ENCODE measurements at regions of chr11 and their contacts with region 1.

Region 1: DNA sequence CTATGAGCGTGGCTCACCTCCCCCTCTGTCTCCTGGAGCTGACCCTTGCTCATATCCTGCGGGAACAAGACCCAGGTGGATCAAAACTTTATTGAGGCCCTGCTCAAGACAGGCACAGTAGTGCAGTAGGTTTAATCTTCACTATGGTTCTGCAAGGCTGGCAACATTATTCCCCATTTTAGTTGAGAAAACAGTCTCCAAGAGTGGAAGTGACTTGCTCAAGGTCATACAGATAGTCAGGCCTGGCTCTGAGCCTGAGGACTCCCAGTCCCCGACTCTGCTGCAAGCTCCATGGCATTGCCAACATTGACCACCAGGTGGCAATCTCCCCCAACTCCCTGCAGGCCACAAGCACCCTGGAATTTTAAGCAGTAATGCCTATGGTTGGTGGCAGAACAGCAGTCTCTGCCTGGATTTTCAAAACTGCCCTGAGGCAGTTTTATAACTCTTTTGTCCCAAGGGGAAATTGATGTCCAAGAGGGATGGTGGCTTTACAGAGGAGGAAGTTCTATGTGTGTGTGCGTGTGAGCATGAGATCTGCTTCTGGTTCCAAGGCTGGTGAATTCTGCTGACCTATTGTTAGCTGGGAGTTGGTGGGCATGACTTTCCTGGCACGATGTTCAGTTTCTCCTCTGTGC is 34.1 kb downstream of the NEU3 start:
- DNase-seq: peak; percentile 64
- H3K4me3 ChIP-seq: no peak overlapping the region
- H3K27ac ChIP-seq: no peak overlapping the region
- H3K4me1 ChIP-seq: no peaks in the 10 kb centered on the region
- H3K27me3 ChIP-seq: no peaks in the 10 kb centered on the region
- CTCF ChIP-seq: peak; percentile 96 to 98

Region 2: GRCh38 chr11:74929431-74930363 is 93.2 kb before region 1 on chr11:
- CTCF ChIA-PET with region 1: interaction called, 9 read pairs
- dilution Hi-C with region 1: no loop called
- in situ Hi-C with region 1: no loop called
- intact Hi-C with region 1: loop called (anchors 2 kb)
- DNase-seq: peak; percentile 77
- H3K4me3 ChIP-seq: no peak overlapping the region
- H3K27ac ChIP-seq: no peak overlapping the region
- H3K4me1 ChIP-seq: peaks cover 21% of the 10 kb centered on the region
- H3K27me3 ChIP-seq: no peaks in the 10 kb centered on the region
- CTCF ChIP-seq: peak; percentile 84 to 88

Region 3: GRCh38 chr11:75063732-75064314 is 40.9 kb after region 1 on chr11:
- CTCF ChIA-PET with region 1: no interaction called
- dilution Hi-C with region 1: no loop called
- in situ Hi-C with region 1: no loop called
- intact Hi-C with region 1: no loop called
- DNase-seq: no peak
- H3K4me3 ChIP-seq: no peak overlapping the region
- H3K27ac ChIP-seq: no peak overlapping the region
- H3K4me1 ChIP-seq: no peaks in the 10 kb centered on the region
- H3K27me3 ChIP-seq: peaks cover 4% of the 10 kb centered on the region
- CTCF ChIP-seq: no peak

Region 4: GRCh38 chr11:75142714-75143419 is 120.0 kb after region 1 on chr11:
- CTCF ChIA-PET with region 1: no interaction called
- dilution Hi-C with region 1: loop called (anchors 10 kb)
- in situ Hi-C with region 1: no loop called
- intact Hi-C with region 1: loop called (anchors 2 kb)
- DNase-seq: peak; percentile 86
- H3K4me3 ChIP-seq: no peak overlapping the region
- H3K27ac ChIP-seq: no peak overlapping the region
- H3K4me1 ChIP-seq: peaks cover 10% of the 10 kb centered on the region
- H3K27me3 ChIP-seq: no peaks in the 10 kb centered on the region
- CTCF ChIP-seq: peak in 1 of 2 donors; percentile 3

Region 5: DNA sequence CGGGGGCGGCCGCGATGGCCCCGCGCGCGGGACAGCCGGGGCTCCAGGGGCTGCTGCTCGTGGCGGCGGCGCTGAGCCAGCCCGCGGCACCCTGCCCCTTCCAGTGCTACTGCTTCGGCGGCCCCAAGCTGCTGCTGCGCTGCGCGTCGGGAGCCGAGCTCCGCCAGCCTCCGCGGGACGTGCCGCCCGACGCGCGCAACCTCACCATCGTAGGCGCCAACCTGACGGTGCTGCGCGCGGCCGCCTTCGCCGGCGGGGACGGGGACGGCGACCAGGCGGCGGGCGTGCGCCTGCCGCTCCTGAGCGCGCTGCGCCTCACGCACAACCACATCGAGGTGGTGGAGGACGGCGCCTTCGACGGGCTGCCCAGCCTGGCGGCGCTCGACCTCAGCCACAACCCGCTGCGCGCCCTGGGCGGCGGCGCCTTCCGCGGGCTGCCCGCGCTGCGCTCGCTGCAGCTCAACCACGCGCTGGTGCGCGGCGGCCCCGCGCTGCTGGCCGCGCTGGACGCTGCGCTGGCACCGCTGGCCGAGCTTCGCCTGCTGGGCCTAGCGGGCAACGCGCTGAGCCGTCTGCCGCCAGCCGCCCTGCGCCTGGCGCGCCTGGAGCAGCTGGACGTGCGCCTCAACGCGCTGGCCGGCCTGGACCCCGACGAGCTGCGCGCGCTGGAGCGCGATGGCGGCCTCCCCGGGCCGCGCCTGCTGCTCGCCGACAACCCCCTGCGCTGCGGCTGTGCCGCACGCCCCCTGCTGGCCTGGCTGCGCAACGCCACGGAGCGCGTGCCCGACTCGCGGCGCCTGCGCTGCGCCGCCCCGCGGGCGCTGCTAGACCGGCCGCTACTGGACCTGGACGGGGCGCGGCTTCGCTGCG is 218.4 kb after region 1 on chr11:
- CTCF ChIA-PET with region 1: no interaction called
- dilution Hi-C with region 1: no loop called
- in situ Hi-C with region 1: loop called (anchors 5 to 10 kb)
- intact Hi-C with region 1: no loop called
- DNase-seq: peak; percentile 76
- H3K4me3 ChIP-seq: peak overlapping the region; percentile 31 to 60 (median 58)
- H3K27ac ChIP-seq: no peak overlapping the region
- H3K4me1 ChIP-seq: peaks cover 11% of the 10 kb centered on the region
- H3K27me3 ChIP-seq: peaks cover 11% of the 10 kb centered on the region
- CTCF ChIP-seq: peak; percentile 51 to 75

Measured in mammary epithelial cell (primary cell).